Right cardiac atrium (tissue), 5 donors: ENCODE measurements at regions of chr9 and their contacts with region 1.

Region 1: GRCh38 chr9:99162759-99163364 is 57.9 kb downstream of the TGFBR1 start:
- DNase-seq: no peak
- ATAC-seq: no peak
- H3K4me3 ChIP-seq: no peak overlapping the region
- H3K27ac ChIP-seq: no peak overlapping the region
- H3K4me1 ChIP-seq: no peaks in the 10 kb centered on the region
- H3K27me3 ChIP-seq: no peaks in the 10 kb centered on the region

Region 2: DNA sequence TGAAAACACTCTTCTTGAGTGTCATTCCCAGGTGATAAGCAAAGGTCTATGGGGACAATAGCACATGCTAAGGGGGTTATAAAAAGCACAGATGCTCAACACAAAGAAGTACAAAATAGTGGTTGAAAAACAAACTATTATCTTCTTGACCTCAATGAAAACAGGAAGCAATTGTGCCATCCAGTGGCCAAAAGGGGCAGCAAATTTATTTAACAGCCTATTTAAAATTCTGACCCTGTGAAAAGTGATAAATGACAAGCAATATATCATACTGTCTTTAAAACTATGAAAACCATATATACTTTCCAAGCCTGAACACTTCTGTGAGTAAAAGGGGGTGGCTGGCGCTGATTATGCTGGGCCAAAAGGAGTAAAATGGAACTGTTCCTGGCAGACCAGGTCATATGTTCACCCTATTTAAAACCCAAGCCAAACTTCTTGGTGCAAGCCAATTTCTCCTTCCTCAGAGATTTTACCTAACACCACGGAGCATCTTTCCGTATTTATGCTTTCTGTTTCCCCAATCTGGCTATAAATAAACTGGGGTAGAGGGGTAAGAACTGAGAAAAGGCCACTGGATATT is 1160.2 kb after region 1 on chr9:
- intact Hi-C with region 1: loop called in 1 of 4 experiments (anchors 10 kb)
- DNase-seq: peak in 2 of 3 donors; percentile 14 to 53
- ATAC-seq: no peak
- H3K4me3 ChIP-seq: no peak overlapping the region
- H3K27ac ChIP-seq: no peak overlapping the region
- H3K4me1 ChIP-seq: no peaks in the 10 kb centered on the region
- H3K27me3 ChIP-seq: no peaks in the 10 kb centered on the region